Natural killer cell (primary cell): ENCODE measurements at regions of chr12 and their contacts with region 1.

Region 1: GRCh38 chr12:6662906-6663742 is at the start of gene ING4:
- DNase-seq: peak; percentile 92 to 99
- ATAC-seq: peak; percentile 97 to 100 (median 98)
- H3K4me3 ChIP-seq: peak within 1 kb of the TSS; percentile 61
- H3K4me3 Mint-ChIP-seq: peak within 1 kb of the TSS; percentile 96
- H3K27ac ChIP-seq: peak within 1 kb of the TSS; percentile 86
- H3K27ac Mint-ChIP-seq: peak within 1 kb of the TSS; percentile 93 to 95
- H3K4me1 ChIP-seq: peaks cover 9% of the 10 kb centered on the region
- H3K4me1 Mint-ChIP-seq: peaks cover 27 to 38% of the 10 kb centered on the region in 2 donors
- H3K27me3 ChIP-seq: no peaks in the 10 kb centered on the region
- H3K27me3 Mint-ChIP-seq: no peaks in the 10 kb centered on the region
- CTCF ChIP-seq: no peak
- total RNA-seq, gene ING4: 29.9 to 40.9 (median 30.2) TPM

Region 2: GRCh38 chr12:6607751-6608591 is 55.2 kb before region 1 on chr12:
- intact Hi-C with region 1: loop called (anchors 1 kb)
- DNase-seq: peak; percentile 49 to 87
- ATAC-seq: peak; percentile 43 to 69 (median 53)
- H3K4me3 ChIP-seq: no peak overlapping the region
- H3K4me3 Mint-ChIP-seq: no peak overlapping the region
- H3K27ac ChIP-seq: peak overlapping the region; percentile 97
- H3K27ac Mint-ChIP-seq: no peak overlapping the region
- H3K4me1 ChIP-seq: peaks cover 59% of the 10 kb centered on the region
- H3K4me1 Mint-ChIP-seq: peaks cover 40 to 53% of the 10 kb centered on the region in 2 donors
- H3K27me3 ChIP-seq: no peaks in the 10 kb centered on the region
- H3K27me3 Mint-ChIP-seq: no peaks in the 10 kb centered on the region
- CTCF ChIP-seq: no peak

Region 3: GRCh38 chr12:6613776-6614512 is 49.2 kb before region 1 on chr12:
- intact Hi-C with region 1: loop called (anchors 1 kb)
- DNase-seq: peak; percentile 72 to 82
- ATAC-seq: peak; percentile 73 to 83 (median 81)
- H3K4me3 ChIP-seq: peak overlapping the region; percentile 11
- H3K4me3 Mint-ChIP-seq: peak overlapping the region; percentile 72
- H3K27ac ChIP-seq: peak overlapping the region; percentile 89
- H3K27ac Mint-ChIP-seq: peak overlapping the region; percentile 90 to 94
- H3K4me1 ChIP-seq: peaks cover 39% of the 10 kb centered on the region
- H3K4me1 Mint-ChIP-seq: peaks cover 22 to 52% of the 10 kb centered on the region in 2 donors
- H3K27me3 ChIP-seq: no peaks in the 10 kb centered on the region
- H3K27me3 Mint-ChIP-seq: no peaks in the 10 kb centered on the region
- CTCF ChIP-seq: no peak

Region 4: GRCh38 chr12:6635856-6636531 is 27.1 kb before region 1 on chr12 and contains the start of gene LPAR5:
- intact Hi-C with region 1: loop called (anchors 2 kb)
- DNase-seq: peak; percentile 31 to 49
- ATAC-seq: peak; percentile 43 to 54 (median 50)
- H3K4me3 ChIP-seq: peak within 1 kb of the TSS; percentile 44
- H3K4me3 Mint-ChIP-seq: peak within 1 kb of the TSS; percentile 86
- H3K27ac ChIP-seq: peak within 1 kb of the TSS; percentile 87
- H3K27ac Mint-ChIP-seq: peak within 1 kb of the TSS; percentile 91 to 93
- H3K4me1 ChIP-seq: peaks cover 78% of the 10 kb centered on the region
- H3K4me1 Mint-ChIP-seq: peaks cover 49 to 51% of the 10 kb centered on the region in 2 donors
- H3K27me3 ChIP-seq: no peaks in the 10 kb centered on the region
- H3K27me3 Mint-ChIP-seq: no peaks in the 10 kb centered on the region
- CTCF ChIP-seq: no peak
- total RNA-seq, gene LPAR5: 10.0 to 27.8 (median 17.3) TPM

Region 5: DNA sequence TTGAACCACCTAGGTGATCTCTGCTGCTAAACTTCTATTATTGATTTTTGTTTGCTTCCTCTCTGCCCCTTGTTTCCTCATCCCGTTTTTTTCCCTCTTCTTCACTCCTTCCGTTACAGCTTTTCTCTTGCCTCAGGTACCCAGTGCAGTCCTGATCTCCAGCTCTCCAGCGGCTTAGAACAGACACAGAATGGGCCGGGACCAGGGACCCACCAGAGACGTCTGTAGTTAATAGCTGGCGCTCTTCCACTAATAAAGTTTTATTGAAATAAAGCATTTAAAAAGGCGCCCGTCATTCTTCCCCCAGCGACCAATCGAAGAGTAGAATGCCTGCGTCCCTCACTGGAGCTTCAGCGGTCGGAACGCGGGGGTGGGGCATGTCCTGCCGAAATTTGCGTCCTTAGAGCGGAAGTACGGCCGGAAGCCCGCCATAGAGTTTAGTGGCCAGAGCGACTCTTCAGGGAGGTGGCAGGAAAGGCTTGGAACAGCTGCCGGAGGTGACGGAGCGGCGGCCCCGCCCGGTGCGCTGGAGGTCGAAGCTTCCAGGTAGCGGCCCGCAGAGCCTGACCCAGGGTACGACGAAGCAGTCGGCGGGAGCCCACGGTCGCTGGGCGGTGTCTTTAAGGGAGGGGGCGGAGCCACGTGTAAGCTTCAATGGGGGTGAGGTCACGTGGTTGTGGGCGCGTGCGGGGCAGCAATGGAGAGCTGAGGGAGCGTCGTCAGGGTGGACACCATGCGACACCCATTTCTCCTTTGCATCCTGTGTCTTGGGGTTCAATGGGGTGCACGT is 60.7 kb after region 1 on chr12 and contains the start of gene COPS7A:
- intact Hi-C with region 1: loop called (anchors 2 kb)
- DNase-seq: peak; percentile 92 to 96
- ATAC-seq: peak; percentile 90 to 97 (median 93)
- H3K4me3 ChIP-seq: peak within 1 kb of the TSS; percentile 68
- H3K4me3 Mint-ChIP-seq: peak within 1 kb of the TSS; percentile 94
- H3K27ac ChIP-seq: peak within 1 kb of the TSS; percentile 84
- H3K27ac Mint-ChIP-seq: peak within 1 kb of the TSS; percentile 77 to 93
- H3K4me1 ChIP-seq: peaks cover 12% of the 10 kb centered on the region
- H3K4me1 Mint-ChIP-seq: peaks cover 20 to 22% of the 10 kb centered on the region in 2 donors
- H3K27me3 ChIP-seq: no peaks in the 10 kb centered on the region
- H3K27me3 Mint-ChIP-seq: peaks cover 0 to 3% of the 10 kb centered on the region in 2 donors
- CTCF ChIP-seq: no peak
- total RNA-seq, gene COPS7A: 23.5 to 29.8 (median 28.9) TPM

Region 6: GRCh38 chr12:6851921-6852650 is 189.0 kb after region 1 on chr12 and contains the start of gene USP5:
- intact Hi-C with region 1: loop called (anchors 1 kb)
- DNase-seq: peak; percentile 96 to 99
- ATAC-seq: peak; percentile 79 to 92 (median 80)
- H3K4me3 ChIP-seq: peak within 1 kb of the TSS; percentile 76
- H3K4me3 Mint-ChIP-seq: peak within 1 kb of the TSS; percentile 91
- H3K27ac ChIP-seq: peak within 1 kb of the TSS; percentile 95
- H3K27ac Mint-ChIP-seq: peak within 1 kb of the TSS; percentile 95 to 99
- H3K4me1 ChIP-seq: peaks cover 22% of the 10 kb centered on the region
- H3K4me1 Mint-ChIP-seq: peaks cover 8 to 43% of the 10 kb centered on the region in 2 donors
- H3K27me3 ChIP-seq: no peaks in the 10 kb centered on the region
- H3K27me3 Mint-ChIP-seq: no peaks in the 10 kb centered on the region
- CTCF ChIP-seq: no peak
- total RNA-seq, gene USP5: 48.3 to 67.2 (median 57.2) TPM

Region 7: DNA sequence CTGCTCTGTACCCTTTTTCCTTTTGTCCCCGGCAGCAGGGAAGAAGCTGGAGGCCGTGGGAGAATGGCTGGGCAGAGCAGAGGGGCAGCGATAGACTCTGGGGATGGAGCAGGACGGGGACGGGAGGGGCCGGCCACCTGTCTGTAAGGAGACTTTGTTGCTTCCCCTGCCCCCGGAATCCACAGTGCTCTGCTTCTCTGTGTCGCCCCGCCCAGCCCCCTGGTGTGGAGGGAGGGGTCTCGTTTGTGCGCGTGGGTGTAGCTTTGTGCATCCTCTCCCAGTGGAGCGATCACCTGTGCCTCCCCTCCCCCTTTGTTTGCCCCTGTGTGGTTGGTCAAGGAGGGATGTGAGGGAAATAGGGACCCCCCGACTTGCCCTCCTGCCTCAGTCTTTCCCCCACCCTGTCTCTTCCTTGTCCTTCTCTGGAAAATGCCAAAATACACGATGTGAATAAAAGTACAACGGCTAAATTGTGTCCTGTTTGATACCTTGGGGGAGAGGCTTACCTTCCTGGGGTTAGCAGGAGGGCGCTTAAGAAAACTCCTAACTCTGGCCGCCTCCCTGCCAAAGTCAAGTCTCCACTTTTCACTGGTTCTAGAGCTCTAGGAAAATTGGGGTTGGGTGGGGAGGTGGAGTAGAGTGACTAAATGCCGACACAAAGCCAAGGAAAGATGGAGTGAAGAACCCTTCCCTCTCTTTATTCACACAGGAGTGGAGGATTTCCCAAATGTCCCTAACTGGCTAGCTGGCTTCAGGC is 203.2 kb after region 1 on chr12:
- intact Hi-C with region 1: no loop called
- DNase-seq: peak in 1 of 2 donors; percentile 30
- ATAC-seq: no peak
- H3K4me3 ChIP-seq: peak overlapping the region; percentile 48
- H3K4me3 Mint-ChIP-seq: peak overlapping the region; percentile 95
- H3K27ac ChIP-seq: peak overlapping the region; percentile 71
- H3K27ac Mint-ChIP-seq: peak overlapping the region; percentile 74 to 84
- H3K4me1 ChIP-seq: peaks cover 36% of the 10 kb centered on the region
- H3K4me1 Mint-ChIP-seq: peaks cover 26 to 34% of the 10 kb centered on the region in 2 donors
- H3K27me3 ChIP-seq: no peaks in the 10 kb centered on the region
- H3K27me3 Mint-ChIP-seq: no peaks in the 10 kb centered on the region
- CTCF ChIP-seq: no peak

Region 8: DNA sequence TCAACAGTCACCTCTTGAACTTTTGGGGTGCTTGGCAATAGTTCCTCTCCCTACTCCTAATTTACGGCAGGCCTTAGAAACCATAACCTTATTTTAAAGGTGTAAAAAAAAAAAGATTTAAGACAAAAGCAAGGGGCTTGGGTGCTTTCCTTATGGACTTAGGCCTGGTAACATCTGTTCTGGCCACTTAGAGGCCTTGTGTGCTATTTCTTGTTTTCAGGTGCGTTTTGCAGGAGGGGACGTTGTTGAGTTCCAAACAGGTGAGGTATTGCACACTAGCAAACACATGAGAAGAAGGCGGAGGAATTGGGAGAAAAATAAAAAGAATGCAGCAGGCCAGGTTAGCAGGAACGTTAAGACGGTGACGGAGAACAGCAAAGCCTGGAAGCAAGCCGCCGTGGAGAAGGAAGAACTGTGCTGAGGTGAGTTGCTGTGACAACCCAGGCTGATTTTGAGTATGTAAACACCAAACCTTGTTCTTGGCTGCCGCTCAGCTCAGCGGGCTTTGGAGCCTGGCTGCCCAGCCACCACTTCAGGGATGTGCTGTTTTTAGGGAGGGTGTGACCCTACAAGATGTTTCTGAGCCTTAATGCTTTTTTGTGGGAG is 324.9 kb after region 1 on chr12:
- intact Hi-C with region 1: no loop called
- DNase-seq: no peak
- ATAC-seq: no peak
- H3K4me3 ChIP-seq: no peak overlapping the region
- H3K4me3 Mint-ChIP-seq: no peak overlapping the region
- H3K27ac ChIP-seq: no peak overlapping the region
- H3K27ac Mint-ChIP-seq: no peak overlapping the region
- H3K4me1 ChIP-seq: no peaks in the 10 kb centered on the region
- H3K4me1 Mint-ChIP-seq: peaks cover 0 to 5% of the 10 kb centered on the region in 2 donors
- H3K27me3 ChIP-seq: no peaks in the 10 kb centered on the region
- H3K27me3 Mint-ChIP-seq: no peaks in the 10 kb centered on the region
- CTCF ChIP-seq: no peak